ENCODE measurements at regions of chr3 and their contacts with region 1.

Region 1: GRCh38 chr3:177359593-177360357 is 162.5 kb upstream of the TBL1XR1 start:
- DNase-seq: peak; percentile 95 to 97 (median 96)
- ATAC-seq: peak; percentile 91 to 94 (median 92)
- H3K4me3 ChIP-seq: peak overlapping the region in 11 of 12 donors; percentile 4 to 57 (median 41)
- H3K27ac ChIP-seq: peak overlapping the region; percentile 73 to 95 (median 91)
- H3K4me1 ChIP-seq: peaks cover 11 to 68% (median 60%) of the 10 kb centered on the region in 12 donors
- H3K27me3 ChIP-seq: no peaks in the 10 kb centered on the region
- CTCF ChIP-seq: peak in 1 of 12 donors; percentile 15
- POLR2A ChIP-seq: no peak

Region 2: DNA sequence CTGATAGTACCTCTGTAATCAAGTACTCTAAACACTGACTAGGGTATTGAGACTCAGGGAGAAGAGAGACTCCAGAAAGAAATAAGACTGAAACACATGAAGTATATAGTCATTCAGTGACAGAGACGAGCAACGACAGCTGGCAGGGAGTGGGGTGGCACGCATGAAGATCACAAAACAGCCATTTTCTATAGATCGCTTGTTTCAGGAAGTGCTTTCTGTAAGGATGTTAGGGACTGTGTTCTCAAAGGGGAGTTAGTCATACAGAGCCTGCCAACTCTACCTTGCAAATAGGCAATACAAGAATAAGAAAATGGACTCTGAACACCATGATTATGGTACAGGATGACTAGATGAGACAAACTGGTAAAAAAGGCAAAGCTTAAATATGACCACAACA is 302.0 kb before region 1 on chr3:
- intact Hi-C with region 1: loop called in 7 of 10 experiments (anchors 2 to 10 kb)
- DNase-seq: no peak
- ATAC-seq: no peak
- H3K4me3 ChIP-seq: no peak overlapping the region
- H3K27ac ChIP-seq: no peak overlapping the region
- H3K4me1 ChIP-seq: peaks cover 0 to 68% (median 39%) of the 10 kb centered on the region in 12 donors
- H3K27me3 ChIP-seq: no peaks in the 10 kb centered on the region
- CTCF ChIP-seq: no peak
- POLR2A ChIP-seq: no peak

Region 3: DNA sequence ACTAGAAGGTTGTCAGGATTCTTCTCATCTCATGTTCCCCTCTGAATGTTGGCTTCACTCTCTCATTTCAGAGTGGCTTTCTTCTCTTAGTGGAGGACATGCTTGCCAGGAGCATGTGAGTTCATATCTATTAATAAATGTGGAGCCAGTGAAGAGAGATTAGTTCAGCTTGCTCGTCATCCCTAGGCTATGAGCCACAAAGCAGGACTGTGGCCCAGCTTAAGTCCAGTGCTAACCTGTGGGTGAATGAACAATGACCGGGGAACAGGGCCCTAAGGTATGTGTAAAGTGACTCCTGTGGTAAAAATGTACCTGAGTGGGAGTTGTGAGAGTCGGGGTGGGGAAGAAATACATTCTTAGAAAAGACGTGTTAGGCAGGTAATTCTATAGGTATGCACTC is 65.6 kb before region 1 on chr3:
- intact Hi-C with region 1: loop called in 2 of 10 experiments (anchors 5 to 10 kb)
- DNase-seq: peak in 4 of 5 donors; percentile 75 to 85 (median 78)
- ATAC-seq: peak; percentile 96 to 97 (median 97)
- H3K4me3 ChIP-seq: no peak overlapping the region
- H3K27ac ChIP-seq: peak overlapping the region; percentile 49 to 90 (median 80)
- H3K4me1 ChIP-seq: peaks cover 0 to 28% (median 9%) of the 10 kb centered on the region in 12 donors
- H3K27me3 ChIP-seq: no peaks in the 10 kb centered on the region
- CTCF ChIP-seq: no peak
- POLR2A ChIP-seq: no peak

Region 4: DNA sequence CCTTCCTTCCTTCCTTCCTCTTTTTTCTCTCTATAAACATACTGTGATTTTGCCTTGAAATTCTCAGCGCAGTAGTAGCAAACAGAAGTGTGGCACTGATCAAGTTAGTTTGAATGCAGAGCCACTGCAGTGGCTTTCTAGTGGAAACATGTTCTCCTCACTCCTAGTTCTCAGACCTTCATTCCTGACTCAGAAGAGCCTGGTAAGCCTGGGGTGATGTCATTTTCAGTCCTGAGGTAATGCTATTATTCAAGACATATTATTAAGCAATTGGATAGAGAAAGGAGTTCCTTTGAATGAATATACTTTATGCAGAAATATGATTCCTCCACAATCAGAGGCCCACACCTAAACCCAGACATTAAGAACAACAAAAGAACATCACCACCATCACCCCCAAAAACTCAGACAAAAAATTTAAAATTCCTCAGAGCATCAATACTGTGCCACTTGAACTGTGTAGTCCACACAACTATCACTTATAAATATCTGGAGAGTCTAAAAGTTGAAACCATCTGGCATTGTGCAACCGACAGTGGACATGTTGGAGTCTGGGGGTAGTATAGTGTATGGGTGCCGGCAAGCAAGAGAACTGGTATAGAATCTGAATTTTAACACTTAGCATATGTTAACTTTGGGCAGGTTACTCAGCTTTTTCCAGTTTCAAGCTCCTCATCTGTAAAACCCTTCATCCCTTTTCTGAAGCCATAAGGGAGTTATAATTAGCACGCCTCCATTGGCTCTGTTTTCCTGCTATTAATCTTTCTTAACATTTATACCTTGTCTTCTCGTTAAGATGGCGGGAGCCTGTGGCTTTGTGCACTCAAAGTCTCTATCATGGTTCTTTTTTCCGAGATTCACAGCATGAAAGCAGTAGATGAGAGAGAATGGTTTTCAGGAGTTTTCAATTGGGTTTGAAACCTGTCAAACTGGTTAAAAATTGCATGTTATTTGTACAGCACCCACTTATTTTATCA is 93.0 kb after region 1 on chr3:
- intact Hi-C with region 1: no loop called
- DNase-seq: no peak
- ATAC-seq: peak in 3 of 4 donors; percentile 50 to 86 (median 58)
- H3K4me3 ChIP-seq: no peak overlapping the region
- H3K27ac ChIP-seq: peak overlapping the region in 2 of 12 donors; percentile 24 to 79
- H3K4me1 ChIP-seq: peaks cover 3 to 47% (median 12%) of the 10 kb centered on the region in 12 donors
- H3K27me3 ChIP-seq: no peaks in the 10 kb centered on the region
- CTCF ChIP-seq: no peak
- POLR2A ChIP-seq: no peak

Region 5: DNA sequence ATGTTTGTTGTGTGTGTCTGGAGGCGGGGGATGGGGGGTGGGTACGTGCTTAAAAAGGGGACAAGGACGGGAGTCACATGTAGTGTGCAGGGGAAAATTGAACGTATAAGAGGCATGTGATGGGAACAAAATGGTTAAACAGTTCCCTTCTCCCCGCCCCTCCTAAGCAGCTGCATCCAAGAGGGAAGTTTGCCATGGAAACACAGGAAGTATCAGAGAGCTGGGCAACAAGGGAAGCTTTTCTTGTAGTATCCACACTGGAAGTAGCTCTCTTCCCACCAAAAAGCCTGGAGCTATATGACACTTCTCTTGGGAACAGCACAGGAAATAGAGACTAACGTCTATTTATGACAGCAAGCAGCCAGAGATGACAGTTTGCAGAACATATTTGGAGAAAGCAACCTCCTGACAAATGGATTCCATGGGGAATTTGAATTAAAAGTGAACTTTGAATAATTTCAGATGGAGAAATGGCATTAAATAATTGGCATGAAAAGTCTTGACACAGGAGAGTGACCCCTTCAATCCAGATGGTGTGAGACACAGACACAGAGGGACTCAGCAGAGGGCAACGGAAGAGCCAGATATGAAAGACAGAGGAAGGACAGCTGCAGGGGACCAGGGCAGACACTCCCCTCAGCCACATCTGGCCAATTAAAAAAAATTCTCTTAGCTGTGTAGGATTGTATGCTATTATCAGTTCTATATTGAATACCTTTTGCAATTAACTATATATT is 131.7 kb after region 1 on chr3:
- intact Hi-C with region 1: loop called in 4 of 10 experiments (anchors 5 to 10 kb)
- DNase-seq: peak in 3 of 5 donors; percentile 25 to 58 (median 30)
- ATAC-seq: peak in 3 of 4 donors; percentile 63 to 83 (median 74)
- H3K4me3 ChIP-seq: no peak overlapping the region
- H3K27ac ChIP-seq: peak overlapping the region in 7 of 12 donors; percentile 8 to 60 (median 52)
- H3K4me1 ChIP-seq: peaks cover 0 to 25% (median 15%) of the 10 kb centered on the region in 12 donors
- H3K27me3 ChIP-seq: no peaks in the 10 kb centered on the region
- CTCF ChIP-seq: no peak
- POLR2A ChIP-seq: no peak

Region 6: DNA sequence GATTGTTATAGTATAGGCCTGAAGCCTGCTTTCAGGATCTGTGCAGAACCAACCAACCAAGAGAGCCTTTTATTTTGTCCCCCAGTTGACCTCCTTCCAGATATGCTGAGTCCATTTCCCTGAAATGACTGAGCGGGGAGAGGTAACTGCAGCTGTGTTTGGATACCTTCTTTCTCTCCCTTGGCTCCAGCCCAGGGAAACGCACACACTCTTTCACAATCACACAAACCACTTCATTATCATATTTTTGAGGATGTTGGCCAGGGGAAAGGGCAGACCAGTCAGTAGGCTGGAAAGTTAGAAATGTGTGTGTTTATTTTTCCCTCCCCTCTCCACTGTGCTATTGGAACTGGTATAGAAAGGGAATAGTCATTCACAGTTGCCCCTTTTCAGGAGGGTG is 255.2 kb after region 1 on chr3:
- intact Hi-C with region 1: loop called in 2 of 10 experiments (anchors 10 kb)
- DNase-seq: peak; percentile 65 to 87 (median 80)
- ATAC-seq: peak in 3 of 4 donors; percentile 72 to 93 (median 87)
- H3K4me3 ChIP-seq: no peak overlapping the region
- H3K27ac ChIP-seq: peak overlapping the region in 3 of 12 donors; percentile 16 to 28 (median 23)
- H3K4me1 ChIP-seq: peaks cover 0 to 55% (median 32%) of the 10 kb centered on the region in 12 donors
- H3K27me3 ChIP-seq: no peaks in the 10 kb centered on the region
- CTCF ChIP-seq: no peak
- POLR2A ChIP-seq: no peak

Region 7: DNA sequence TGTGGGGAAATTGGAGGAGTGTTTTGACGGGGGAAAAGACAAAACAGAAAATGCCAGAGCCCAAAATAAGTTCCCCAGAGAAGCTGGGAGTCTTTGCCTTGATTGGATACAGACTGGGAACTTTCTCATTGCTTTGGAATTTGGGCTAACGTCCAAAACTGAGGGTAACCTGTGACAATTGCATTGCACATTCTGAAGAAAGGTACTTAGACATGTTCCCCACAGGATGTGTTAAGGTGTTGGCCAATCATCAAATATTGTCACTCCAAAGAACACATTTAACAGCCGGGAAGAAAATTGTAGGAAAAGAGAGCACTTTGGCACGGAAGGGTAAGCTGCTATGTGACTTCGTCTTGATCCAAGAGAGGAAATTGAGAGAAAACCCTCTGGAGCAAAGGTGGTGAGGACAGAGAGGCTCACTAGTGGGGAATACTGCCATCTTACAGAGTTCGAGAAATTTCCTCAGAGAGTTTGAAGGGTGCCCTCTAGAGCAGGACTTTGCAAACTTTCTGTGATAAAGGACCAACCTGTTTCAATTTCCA is 457.0 kb after region 1 on chr3:
- intact Hi-C with region 1: loop called in 1 of 10 experiments (anchors 5 kb)
- DNase-seq: peak in 1 of 5 donors; percentile 23
- ATAC-seq: peak; percentile 47 to 72 (median 61)
- H3K4me3 ChIP-seq: no peak overlapping the region
- H3K27ac ChIP-seq: peak overlapping the region in 10 of 12 donors; percentile 6 to 63 (median 52)
- H3K4me1 ChIP-seq: peaks cover 5 to 52% (median 28%) of the 10 kb centered on the region in 12 donors
- H3K27me3 ChIP-seq: no peaks in the 10 kb centered on the region
- CTCF ChIP-seq: peak in 6 of 12 donors; percentile 13 to 49 (median 36)
- POLR2A ChIP-seq: no peak

Region 8: DNA sequence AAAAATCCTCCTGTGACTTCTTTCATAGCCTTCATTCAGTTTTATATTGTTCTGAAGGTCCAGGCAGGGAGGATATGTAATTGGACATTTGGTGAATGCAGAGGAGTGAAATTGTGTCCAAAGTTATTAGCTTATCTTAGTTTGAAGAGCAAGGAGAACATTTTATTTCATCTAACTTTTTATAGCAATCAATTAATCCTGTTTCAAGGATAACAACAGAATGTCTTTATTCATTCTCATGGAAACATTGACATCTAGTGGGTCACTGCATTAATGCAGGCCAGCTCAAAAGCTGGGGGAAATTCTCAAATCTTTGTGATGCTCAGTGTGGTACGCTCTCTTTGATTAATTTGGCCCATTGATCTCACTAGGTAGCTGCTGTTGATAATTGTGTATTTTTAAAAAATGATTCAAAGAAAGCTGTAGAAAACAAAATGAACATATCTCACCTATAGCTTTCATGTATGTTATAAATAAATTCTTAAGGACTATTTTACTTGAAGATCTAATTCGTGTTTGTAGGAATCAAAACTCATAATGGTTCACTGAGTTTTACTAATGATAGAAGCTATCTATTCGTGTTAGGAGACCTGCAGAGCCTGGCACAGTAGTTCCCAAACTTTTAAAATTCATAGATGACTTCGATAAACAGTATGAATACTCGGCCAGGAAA is 1025.6 kb after region 1 on chr3:
- intact Hi-C with region 1: loop called in 4 of 10 experiments (anchors 5 to 10 kb)
- DNase-seq: no peak
- ATAC-seq: peak in 3 of 4 donors; percentile 64 to 74 (median 72)
- H3K4me3 ChIP-seq: peak overlapping the region in 6 of 12 donors; percentile 1 to 34 (median 6)
- H3K27ac ChIP-seq: peak overlapping the region in 8 of 12 donors; percentile 20 to 75 (median 56)
- H3K4me1 ChIP-seq: peaks cover 0 to 41% (median 22%) of the 10 kb centered on the region in 12 donors
- H3K27me3 ChIP-seq: no peaks in the 10 kb centered on the region
- CTCF ChIP-seq: peak; percentile 64 to 94 (median 84)
- POLR2A ChIP-seq: no peak